Right ventricle myocardium inferior (tissue), 1 donor: ENCODE measurements at regions of chr1 and their contacts with region 1.

Region 1: DNA sequence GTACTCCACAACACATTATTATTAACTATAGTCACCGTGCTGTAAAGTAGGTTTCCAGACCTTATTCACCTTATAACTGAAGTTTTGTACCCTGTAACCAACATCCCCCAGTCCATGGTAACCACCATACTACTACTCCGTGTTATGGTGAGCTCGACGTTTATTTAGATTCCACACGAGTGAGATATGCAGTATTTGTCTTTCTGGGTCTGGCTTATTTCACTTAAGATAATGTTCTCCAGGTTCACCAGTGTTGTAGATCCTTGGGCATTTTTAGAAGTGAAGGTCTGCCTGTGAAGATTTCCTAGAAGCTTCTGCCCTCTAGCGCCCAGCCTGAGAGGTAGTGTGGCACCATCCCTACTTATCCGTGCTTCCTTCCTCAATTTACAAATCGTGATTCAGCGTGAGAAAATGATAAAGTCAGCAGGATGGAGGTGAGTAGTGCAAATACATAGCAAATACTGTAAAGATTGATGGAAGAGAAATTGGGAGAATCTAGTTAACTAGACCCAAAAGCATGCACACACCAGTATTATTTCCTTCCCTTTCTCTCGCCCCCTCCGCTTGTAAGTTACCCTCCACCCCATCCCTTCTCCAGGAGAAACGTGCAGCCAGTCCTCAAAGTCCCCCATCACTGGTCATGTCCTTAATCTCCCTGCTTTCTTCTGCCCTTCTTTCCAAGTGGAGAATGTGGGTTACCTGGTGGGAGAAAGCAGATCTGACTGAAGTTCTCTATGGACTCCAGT is 36.0 kb upstream of the DISC1 start:
- DNase-seq: no peak
- ATAC-seq: peak; percentile 81

Region 2: DNA sequence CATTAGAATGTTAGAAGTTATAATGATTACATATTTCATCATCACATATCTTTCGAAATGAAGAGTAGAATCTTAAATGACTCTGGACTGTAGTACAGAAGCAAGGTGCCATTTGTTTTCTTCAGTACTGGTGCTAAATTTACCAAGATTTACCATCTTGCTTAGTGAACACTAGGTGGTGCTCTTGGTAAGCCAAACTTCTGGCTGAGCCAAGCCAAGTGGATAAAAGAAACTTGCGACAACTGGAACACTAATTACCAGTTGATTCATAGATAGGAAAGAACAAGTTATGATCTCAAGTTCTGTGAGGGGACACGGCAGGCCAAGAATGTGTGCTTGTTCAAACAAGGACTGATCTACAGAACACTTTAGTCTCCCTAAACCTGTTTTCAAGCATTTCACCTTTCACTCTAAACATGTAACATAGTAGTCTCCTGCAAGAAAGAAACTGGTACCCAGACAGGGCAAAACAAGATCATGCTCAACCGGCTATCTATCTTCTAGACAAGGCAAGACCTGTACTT is 232.7 kb before region 1 on chr1:
- intact Hi-C with region 1: loop called (anchors 1 kb)
- DNase-seq: no peak
- ATAC-seq: peak; percentile 72

Region 3: GRCh38 chr1:231653632-231654031 is 63.0 kb after region 1 on chr1:
- intact Hi-C with region 1: no loop called
- DNase-seq: no peak
- ATAC-seq: no peak